ENCODE measurements at regions of chr3 and their contacts with region 1.

Region 1: DNA sequence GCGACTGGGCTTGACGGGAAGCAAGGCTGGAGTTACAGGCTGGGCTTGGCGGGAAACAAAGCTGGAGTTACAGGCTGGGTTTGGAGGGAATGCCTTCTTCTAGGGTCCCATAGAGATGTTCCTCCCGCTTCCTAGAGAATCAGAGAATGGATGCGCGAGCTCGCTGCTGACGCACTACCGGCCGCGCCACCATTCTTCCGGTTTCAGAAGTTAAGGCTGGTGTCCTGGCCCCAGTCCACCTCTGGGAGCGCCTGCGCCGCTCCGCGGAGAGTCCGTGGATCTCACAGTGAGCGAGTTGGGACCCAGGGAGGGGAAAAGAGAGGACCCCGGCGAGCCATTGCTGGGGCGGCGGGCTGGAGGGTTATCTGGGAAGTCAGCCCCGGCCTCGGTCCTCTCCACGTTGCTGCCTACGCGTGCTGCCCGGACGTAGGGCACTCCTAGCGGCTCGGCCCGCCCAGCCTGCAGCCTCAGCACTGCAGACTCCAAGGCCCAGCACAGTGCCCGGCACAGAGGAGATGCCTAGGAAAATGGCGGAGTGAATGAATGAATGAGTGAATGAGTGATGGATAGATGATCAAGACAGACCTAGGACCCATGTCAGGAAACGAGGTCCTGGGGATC is at the start of gene ZNF502:
- DNase-seq: peak; percentile 84
- ATAC-seq: peak; percentile 99
- H3K4me3 ChIP-seq: peak within 1 kb of the TSS; percentile 75
- H3K27ac ChIP-seq: peak within 1 kb of the TSS; percentile 63
- H3K4me1 ChIP-seq: no peaks in the 10 kb centered on the region
- H3K27me3 ChIP-seq: no peaks in the 10 kb centered on the region
- CTCF ChIP-seq: 0 out of 2 replicates have a peak, but pooled peaks have one; percentile 7
- POLR2A ChIP-seq: 0 out of 2 replicates have a peak, but pooled peaks have one; percentile 20
- RAD21 ChIP-seq: peak; percentile 22; the same call in 1 of the 2 replicates
- total RNA-seq, gene ZNF502: 5.7 and 6.1 TPM in 2 replicates

Region 2: DNA sequence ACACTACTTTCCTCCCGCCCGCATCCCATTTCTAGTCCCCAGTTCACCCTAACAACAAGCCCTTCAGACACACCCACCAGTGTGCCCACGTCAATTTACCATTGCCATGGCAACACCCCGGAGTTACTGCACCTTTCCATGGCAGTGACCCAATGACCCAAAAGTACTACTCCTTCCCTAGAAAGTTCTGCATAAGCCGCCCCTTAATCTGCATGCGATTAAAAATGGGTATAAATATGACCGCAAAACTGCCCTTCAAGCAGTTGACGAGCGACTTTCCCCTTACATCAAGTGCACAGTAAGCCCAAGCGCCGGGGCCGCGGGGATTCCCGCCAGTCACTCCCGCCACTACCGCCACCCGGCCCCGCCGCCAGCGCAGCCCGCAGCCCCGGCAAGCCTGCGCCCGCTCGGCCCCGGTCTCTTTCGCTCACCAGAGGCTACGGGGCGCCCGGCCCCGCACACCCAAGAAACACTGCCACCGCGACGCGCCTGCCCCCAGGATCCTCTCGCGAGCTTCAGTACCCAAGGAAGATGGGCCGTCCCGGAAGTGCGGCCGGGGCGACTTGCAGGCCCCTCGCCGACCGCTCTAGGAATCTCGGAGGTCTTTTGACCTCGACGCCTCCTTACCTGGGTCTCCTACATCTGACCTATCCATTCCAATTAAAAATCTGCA is 27.3 kb before region 1 on chr3:
- CTCF ChIA-PET with region 1: no interaction called
- POLR2A ChIA-PET with region 1: no interaction called
- dilution Hi-C with region 1: no loop called
- in situ Hi-C with region 1: no loop called
- intact Hi-C with region 1: loop called (anchors 1 kb)
- DNase-seq: peak; percentile 84
- ATAC-seq: peak; percentile 98
- H3K4me3 ChIP-seq: peak overlapping the region; percentile 65
- H3K27ac ChIP-seq: no peak overlapping the region
- H3K4me1 ChIP-seq: no peaks in the 10 kb centered on the region
- H3K27me3 ChIP-seq: no peaks in the 10 kb centered on the region
- CTCF ChIP-seq: no peak
- POLR2A ChIP-seq: no peak
- RAD21 ChIP-seq: no peak

Region 3: DNA sequence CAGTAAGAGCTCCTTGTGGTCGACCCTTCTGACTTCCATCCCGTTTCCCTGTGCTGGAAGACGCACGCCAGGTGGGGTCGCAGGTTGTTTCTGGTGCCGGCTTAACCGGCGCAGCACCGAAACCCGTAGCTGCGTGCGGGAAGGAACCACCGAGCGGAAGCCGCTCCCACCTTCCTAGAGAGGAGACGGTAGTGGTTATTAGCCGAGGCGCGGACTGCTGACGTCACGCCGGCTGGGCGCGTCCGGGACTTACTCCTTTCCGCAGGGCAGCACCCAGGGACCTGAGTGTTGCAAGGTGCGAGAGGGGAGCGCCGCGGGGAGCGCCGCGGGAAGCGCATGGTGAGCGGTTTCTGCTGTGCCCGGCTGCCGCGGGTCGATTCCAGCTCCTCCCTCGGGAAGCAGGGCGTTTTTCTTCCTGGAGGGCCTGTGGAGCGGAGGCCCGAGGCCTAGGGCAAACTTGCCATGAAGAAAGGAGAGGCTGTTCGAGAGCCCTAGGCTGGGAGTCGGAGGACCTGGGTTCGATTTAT is 16.9 kb after region 1 on chr3 and contains the start of gene ZNF501:
- CTCF ChIA-PET with region 1: interaction called, 3 read pairs
- POLR2A ChIA-PET with region 1: interaction called, 5 read pairs
- dilution Hi-C with region 1: no loop called
- in situ Hi-C with region 1: no loop called
- intact Hi-C with region 1: loop called (anchors 1 kb)
- DNase-seq: peak; percentile 86
- ATAC-seq: peak; percentile 97
- H3K4me3 ChIP-seq: peak within 1 kb of the TSS; percentile 91
- H3K27ac ChIP-seq: peak within 1 kb of the TSS; percentile 68
- H3K4me1 ChIP-seq: no peaks in the 10 kb centered on the region
- H3K27me3 ChIP-seq: no peaks in the 10 kb centered on the region
- CTCF ChIP-seq: no peak
- POLR2A ChIP-seq: no peak
- RAD21 ChIP-seq: no peak
- total RNA-seq, gene ZNF501: 3.2 and 4.7 TPM in 2 replicates

Region 4: DNA sequence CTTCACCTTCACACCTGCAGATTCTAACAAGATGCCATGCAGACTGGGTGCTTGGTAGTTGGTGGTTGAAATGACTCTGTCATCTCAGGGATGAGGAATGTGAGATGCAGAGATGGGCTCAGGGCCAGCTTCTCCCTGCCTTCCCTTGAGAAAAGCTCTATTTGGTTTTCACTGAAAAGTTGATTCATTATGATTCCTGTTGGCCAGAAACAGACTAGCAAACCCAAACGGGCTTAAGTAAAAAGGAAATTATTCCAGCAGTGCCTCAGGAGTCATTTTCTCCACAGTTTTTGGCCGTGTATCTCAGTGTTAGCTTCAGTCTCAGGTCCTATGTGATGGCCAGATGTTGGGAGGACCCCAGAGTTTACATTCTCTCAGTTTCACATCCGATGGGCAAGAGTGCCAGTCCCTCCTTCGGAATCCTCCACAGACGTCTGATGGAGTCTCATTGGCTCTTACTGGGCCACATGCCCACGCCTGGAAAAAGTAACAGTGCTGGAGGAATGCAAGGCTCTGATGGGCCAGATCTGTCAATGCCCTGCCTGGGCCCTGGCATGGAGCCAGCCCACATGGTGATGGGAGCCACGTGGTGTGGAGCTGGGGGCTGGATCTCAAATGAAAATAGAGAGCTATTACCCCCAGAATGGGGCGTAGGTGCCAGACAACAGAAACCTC is 954.3 kb after region 1 on chr3:
- CTCF ChIA-PET with region 1: no interaction called
- POLR2A ChIA-PET with region 1: no interaction called
- dilution Hi-C with region 1: no loop called
- in situ Hi-C with region 1: no loop called
- intact Hi-C with region 1: no loop called
- DNase-seq: peak; percentile 69
- ATAC-seq: peak; percentile 29
- H3K4me3 ChIP-seq: no peak overlapping the region
- H3K27ac ChIP-seq: peak overlapping the region; percentile 71
- H3K4me1 ChIP-seq: peaks cover 34% of the 10 kb centered on the region
- H3K27me3 ChIP-seq: no peaks in the 10 kb centered on the region
- CTCF ChIP-seq: no peak
- POLR2A ChIP-seq: no peak
- RAD21 ChIP-seq: no peak